ENCODE measurements at regions of chrX and their contacts with region 1.

Region 1: DNA sequence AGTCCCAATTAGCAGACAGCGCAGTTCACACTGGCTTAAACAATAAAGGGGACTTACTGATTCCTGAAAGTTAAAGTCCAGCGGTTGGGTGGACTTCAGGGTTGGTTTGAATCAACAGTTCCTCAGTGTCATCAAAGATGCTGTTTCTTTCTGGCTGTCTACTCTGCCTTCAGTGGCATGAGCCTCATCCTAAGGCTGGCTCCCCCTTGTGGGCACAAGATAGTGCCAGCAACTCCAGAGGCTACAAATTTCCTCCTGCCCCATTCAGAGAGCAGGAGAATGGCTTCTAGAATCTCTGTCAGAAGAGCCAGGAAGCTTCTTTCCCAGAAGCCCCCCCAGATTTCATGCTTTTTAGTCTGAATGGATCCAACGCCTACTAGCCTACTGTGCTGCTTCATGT is 82.4 kb upstream of the MTM1 start:
- DNase-seq: peak; percentile 33 to 46
- H3K4me3 ChIP-seq: no peak overlapping the region
- H3K27ac ChIP-seq: no peak overlapping the region
- H3K4me1 ChIP-seq: peaks cover 17% of the 10 kb centered on the region
- H3K27me3 ChIP-seq: no peaks in the 10 kb centered on the region
- CTCF ChIP-seq: peak; percentile 85

Region 2: DNA sequence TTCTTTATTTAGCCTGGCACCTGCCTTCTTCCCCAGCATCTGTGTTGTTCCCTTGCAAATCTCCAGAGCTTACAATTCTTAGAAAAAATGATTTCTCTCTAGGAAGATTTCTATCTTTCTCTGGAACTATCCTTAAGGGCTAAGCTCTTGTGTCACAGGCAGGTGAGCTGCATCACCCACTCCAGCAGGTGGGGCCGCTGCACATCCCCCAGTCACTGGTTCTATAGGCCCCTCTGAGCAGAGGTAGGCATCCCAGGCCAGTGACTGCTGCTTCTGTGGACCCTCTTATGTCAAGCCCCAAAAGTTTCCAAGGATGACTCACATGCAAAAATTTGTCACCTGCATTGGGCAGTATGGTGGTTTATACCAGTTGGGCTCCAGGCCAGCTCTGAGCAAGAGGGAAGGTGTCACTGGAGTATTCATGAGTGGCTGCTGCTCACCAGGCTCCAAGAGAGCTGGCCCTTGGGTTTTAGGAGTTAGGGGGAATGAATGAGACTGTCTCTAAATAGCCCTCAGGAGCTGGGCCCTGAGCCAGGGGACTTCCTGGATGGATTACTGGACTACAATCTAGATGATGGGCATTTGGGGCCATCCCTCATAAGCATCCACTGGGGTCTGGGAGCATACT is 339.6 kb before region 1 on chrX:
- CTCF ChIA-PET with region 1: no interaction called
- POLR2A ChIA-PET with region 1: no interaction called
- intact Hi-C with region 1: loop called (anchors 10 kb)
- DNase-seq: peak in 1 of 2 experiments; percentile 34
- H3K4me3 ChIP-seq: no peak overlapping the region
- H3K27ac ChIP-seq: no peak overlapping the region
- H3K4me1 ChIP-seq: no peaks in the 10 kb centered on the region
- H3K27me3 ChIP-seq: no peaks in the 10 kb centered on the region
- CTCF ChIP-seq: 0 out of 2 replicates have a peak, but pooled peaks have one; percentile 23

Region 3: DNA sequence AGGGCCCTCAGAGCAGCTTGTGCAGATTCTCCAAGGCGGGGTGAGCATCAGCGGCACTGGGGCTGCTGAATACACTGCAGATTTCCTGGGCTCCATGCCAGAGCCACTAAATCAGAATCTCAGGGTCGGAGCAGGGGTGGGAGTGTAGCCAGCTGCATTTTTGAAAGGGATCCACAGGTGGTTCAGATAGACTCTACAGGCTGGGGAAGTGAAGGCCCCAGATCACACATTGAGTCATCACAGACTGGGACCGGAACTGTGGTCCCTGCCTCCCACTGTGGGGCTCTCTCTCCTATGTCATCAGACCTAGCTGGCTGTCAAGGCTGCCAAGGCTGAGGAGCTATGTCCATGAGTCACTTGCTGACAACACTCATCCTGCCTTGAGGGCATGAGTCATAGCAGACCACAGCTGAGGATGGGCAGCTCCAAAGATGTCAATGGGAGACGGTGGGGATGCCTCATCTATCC is 285.2 kb before region 1 on chrX:
- CTCF ChIA-PET with region 1: no interaction called
- POLR2A ChIA-PET with region 1: no interaction called
- intact Hi-C with region 1: loop called (anchors 5 kb)
- DNase-seq: peak; percentile 85 to 98
- H3K4me3 ChIP-seq: no peak overlapping the region
- H3K27ac ChIP-seq: no peak overlapping the region
- H3K4me1 ChIP-seq: peaks cover 15% of the 10 kb centered on the region
- H3K27me3 ChIP-seq: no peaks in the 10 kb centered on the region
- CTCF ChIP-seq: no peak

Region 4: GRCh38 chrX:150587585-150588503 is 101.8 kb after region 1 on chrX:
- CTCF ChIA-PET with region 1: no interaction called
- POLR2A ChIA-PET with region 1: no interaction called
- intact Hi-C with region 1: loop called (anchors 5 kb)
- DNase-seq: peak in 1 of 2 experiments; percentile 44
- H3K4me3 ChIP-seq: no peak overlapping the region
- H3K27ac ChIP-seq: no peak overlapping the region
- H3K4me1 ChIP-seq: no peaks in the 10 kb centered on the region
- H3K27me3 ChIP-seq: no peaks in the 10 kb centered on the region
- CTCF ChIP-seq: peak; percentile 94

Measured in PC-9 (cell line).